Vagina (tissue), 2 donors: ENCODE measurements at regions of chr6 and their contacts with region 1.

Region 1: DNA sequence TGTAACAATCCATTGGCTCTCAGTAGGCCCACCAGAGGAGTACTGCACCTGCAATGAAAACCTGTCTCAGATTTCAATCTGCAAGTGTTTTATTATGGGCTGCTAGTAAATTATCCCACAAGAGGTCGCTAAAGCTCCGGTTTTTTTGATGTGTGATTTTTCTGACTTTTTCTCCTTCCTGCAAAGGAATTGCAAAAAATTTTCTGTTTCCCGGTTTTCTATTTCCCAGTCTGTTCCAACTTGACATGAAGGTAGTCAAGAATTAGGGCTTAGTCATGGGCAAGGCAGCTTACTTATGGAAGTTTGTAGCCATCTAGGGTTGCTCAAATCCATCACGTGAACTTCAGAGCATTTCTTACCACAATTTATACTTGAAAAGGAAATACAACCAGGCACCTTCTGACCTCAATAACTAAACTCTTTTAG is 38.5 kb upstream of the AHI1 start:
- DNase-seq: no peak
- H3K4me3 ChIP-seq: no peak overlapping the region
- H3K27ac ChIP-seq: no peak overlapping the region
- H3K4me1 ChIP-seq: no peaks in the 10 kb centered on the region
- H3K27me3 ChIP-seq: no peaks in the 10 kb centered on the region
- CTCF ChIP-seq: peak in 2 of 3 experiments; percentile 40 to 65
- POLR2A ChIP-seq: no peak

Region 2: DNA sequence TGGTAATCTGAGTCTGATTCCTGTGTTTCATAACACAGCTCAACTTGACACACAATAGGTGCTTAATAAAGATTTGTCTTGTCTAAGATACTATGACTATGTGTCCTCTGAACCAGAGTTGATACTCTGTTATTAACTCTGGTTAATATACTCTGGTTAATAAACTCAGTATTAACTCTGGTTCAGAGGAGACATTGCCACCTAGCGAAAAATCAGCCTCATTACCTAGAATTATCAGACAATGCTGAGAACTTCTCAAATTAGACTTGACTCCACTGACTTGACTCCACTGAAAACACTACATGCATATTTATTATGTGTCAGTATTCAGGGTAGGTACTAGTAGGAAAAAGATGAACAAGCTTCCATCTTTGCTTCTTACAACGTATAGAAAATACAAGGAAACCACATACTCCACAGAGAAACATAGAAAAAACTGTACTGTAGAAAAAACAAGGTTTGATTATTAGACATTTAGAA is 112.3 kb before region 1 on chr6:
- intact Hi-C with region 1: no loop called
- DNase-seq: no peak
- H3K4me3 ChIP-seq: no peak overlapping the region
- H3K27ac ChIP-seq: no peak overlapping the region
- H3K4me1 ChIP-seq: no peaks in the 10 kb centered on the region
- H3K27me3 ChIP-seq: no peaks in the 10 kb centered on the region
- CTCF ChIP-seq: peak; percentile 24 to 53 (median 52)
- POLR2A ChIP-seq: no peak

Region 3: DNA sequence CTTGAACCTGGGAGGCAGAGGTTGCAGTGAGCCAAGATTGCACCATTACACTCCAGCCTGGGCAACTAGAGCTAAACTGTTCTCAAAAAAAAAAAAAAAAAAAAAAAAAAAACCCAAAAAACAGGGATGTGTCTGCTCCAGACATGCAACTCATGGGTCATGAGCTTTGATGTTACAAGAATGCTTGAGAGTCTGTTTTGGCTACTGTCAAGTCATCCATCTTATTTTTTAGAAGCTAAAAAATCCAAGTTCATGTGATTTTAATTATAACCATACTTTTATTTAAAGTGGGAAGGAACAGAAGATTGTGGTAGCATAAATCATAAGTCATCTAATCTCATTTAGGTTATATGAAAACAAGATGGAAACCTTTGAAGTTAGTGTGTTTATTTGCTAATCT is 436.1 kb after region 1 on chr6:
- intact Hi-C with region 1: no loop called
- DNase-seq: no peak
- H3K4me3 ChIP-seq: no peak overlapping the region
- H3K27ac ChIP-seq: no peak overlapping the region
- H3K4me1 ChIP-seq: no peaks in the 10 kb centered on the region
- H3K27me3 ChIP-seq: no peaks in the 10 kb centered on the region
- CTCF ChIP-seq: no peak
- POLR2A ChIP-seq: no peak

Region 4: GRCh38 chr6:136226027-136226673 is 690.1 kb after region 1 on chr6:
- intact Hi-C with region 1: loop called (anchors 5 kb)
- DNase-seq: no peak
- H3K4me3 ChIP-seq: peak overlapping the region in 1 of 2 donors; percentile 4
- H3K27ac ChIP-seq: no peak overlapping the region
- H3K4me1 ChIP-seq: no peaks in the 10 kb centered on the region
- H3K27me3 ChIP-seq: no peaks in the 10 kb centered on the region
- CTCF ChIP-seq: peak; percentile 94 to 99 (median 98)
- POLR2A ChIP-seq: no peak